Lower leg skin (tissue), 4 donors: ENCODE measurements at regions of chr19 and their contacts with region 1.

Region 1: GRCh38 chr19:52626915-52627314 is 11.2 kb downstream of the ZNF83 start:
- DNase-seq: peak in 1 of 2 donors; percentile 17
- H3K4me3 ChIP-seq: no peak overlapping the region
- CTCF ChIP-seq: no peak
- POLR2A ChIP-seq: no peak

Region 2: DNA sequence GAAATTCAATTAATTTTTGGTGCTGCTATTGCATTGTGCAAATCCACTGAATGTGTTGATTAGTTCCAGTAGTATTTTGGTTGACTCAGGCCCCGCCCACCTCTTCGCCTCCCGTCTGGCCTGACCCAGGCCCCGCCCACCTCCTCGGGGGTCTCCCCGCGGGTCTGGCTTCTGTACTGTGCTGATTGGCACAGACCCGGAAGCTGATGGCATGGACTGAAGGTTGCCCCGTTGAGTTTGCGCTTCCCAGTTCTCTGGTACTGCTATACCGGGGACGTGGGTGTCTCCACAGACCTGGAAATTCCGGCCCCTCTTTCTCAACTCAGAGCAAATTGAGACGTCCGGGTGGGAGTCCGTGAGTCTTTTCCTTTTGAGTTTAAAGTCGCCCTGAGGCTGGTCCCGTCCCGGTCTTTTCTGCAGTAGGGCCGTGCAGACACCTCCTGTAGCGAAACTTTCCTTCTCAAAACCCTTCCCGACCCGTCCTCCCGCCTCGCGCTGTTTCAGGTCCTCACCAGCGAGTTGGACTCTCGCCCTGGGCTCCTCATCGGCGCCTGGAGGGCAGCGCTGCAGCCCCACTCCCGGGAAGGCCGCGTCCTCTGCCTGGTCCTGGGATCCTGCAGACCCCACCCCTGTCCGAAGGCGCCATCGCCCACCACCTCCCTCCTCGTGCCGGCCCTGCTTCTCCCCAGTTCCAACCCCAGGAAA is 42.0 kb before region 1 on chr19:
- intact Hi-C with region 1: loop called (anchors 1 kb)
- DNase-seq: peak in 1 of 2 donors; percentile 61
- H3K4me3 ChIP-seq: no peak overlapping the region
- CTCF ChIP-seq: no peak
- POLR2A ChIP-seq: no peak